Gastrocnemius medialis (tissue), 4 donors: ENCODE measurements at regions of chr11 and their contacts with region 1.

Region 1: GRCh38 chr11:57456960-57457642 is 3.2 kb upstream of the RTN4RL2 start:
- DNase-seq: peak; percentile 73 to 84
- ATAC-seq: peak; percentile 82 to 87
- H3K4me3 ChIP-seq: peak overlapping the region in 1 of 4 donors; percentile 30
- H3K27ac ChIP-seq: no peak overlapping the region
- H3K4me1 ChIP-seq: peaks cover 21 to 30% of the 10 kb centered on the region in 2 donors
- H3K27me3 ChIP-seq: peaks cover 22 to 41% (median 33%) of the 10 kb centered on the region in 3 donors
- CTCF ChIP-seq: peak; percentile 94 to 100 (median 96)
- POLR2A ChIP-seq: no peak

Region 2: DNA sequence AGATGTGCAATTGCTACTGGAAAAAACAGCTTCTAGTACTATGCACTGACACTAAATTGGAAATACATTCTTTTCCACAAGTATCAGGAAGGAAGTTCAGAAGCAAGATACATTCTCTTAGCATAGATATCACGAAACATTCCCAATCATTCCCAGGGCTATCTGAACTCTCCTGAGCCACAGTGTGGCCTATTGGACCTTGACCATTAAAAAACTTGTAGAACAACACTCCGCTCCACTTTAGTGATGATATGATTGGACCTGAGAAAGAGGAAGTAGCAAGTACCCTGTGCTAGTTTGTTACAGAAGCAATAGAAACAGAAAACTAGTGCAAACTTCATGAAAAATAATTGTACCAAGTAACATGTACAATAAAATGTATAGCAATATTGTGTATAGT is 479.8 kb before region 1 on chr11:
- in situ Hi-C with region 1: no loop called
- intact Hi-C with region 1: no loop called
- DNase-seq: no peak
- ATAC-seq: no peak
- H3K4me3 ChIP-seq: no peak overlapping the region
- H3K27ac ChIP-seq: no peak overlapping the region
- H3K4me1 ChIP-seq: no peaks in the 10 kb centered on the region
- H3K27me3 ChIP-seq: no peaks in the 10 kb centered on the region
- CTCF ChIP-seq: no peak
- POLR2A ChIP-seq: no peak

Region 3: GRCh38 chr11:57345555-57346211 is 111.4 kb before region 1 on chr11:
- in situ Hi-C with region 1: no loop called
- intact Hi-C with region 1: loop called (anchors 5 kb)
- DNase-seq: peak; percentile 46 to 70
- ATAC-seq: peak; percentile 84 to 92
- H3K4me3 ChIP-seq: no peak overlapping the region
- H3K27ac ChIP-seq: no peak overlapping the region
- H3K4me1 ChIP-seq: no peaks in the 10 kb centered on the region
- H3K27me3 ChIP-seq: no peaks in the 10 kb centered on the region
- CTCF ChIP-seq: peak; percentile 37 to 90 (median 68)
- POLR2A ChIP-seq: no peak

Region 4: GRCh38 chr11:57530596-57531507 is 73.8 kb after region 1 on chr11 and contains the start of gene TIMM10:
- in situ Hi-C with region 1: loop called in 2 of 4 experiments (anchors 5 kb)
- intact Hi-C with region 1: loop called (anchors 1 kb)
- DNase-seq: peak; percentile 96 to 98
- ATAC-seq: peak; percentile 95 to 97
- H3K4me3 ChIP-seq: peak within 1 kb of the TSS; percentile 84 to 94 (median 85)
- H3K27ac ChIP-seq: peak within 1 kb of the TSS; percentile 88 to 92 (median 90)
- H3K4me1 ChIP-seq: peaks cover 13 to 19% of the 10 kb centered on the region in 2 donors
- H3K27me3 ChIP-seq: no peaks in the 10 kb centered on the region
- CTCF ChIP-seq: no peak
- POLR2A ChIP-seq: peak; percentile 53 to 82
- total RNA-seq, gene TIMM10: 45.4 to 61.7 (median 49.5) TPM

Region 5: GRCh38 chr11:57644748-57645688 is 187.9 kb after region 1 on chr11:
- in situ Hi-C with region 1: loop called (anchors 5 to 25 kb)
- intact Hi-C with region 1: loop called (anchors 1 kb)
- DNase-seq: peak; percentile 66 to 73
- ATAC-seq: peak; percentile 69 to 76
- H3K4me3 ChIP-seq: no peak overlapping the region
- H3K27ac ChIP-seq: peak overlapping the region; percentile 29 to 56 (median 44)
- H3K4me1 ChIP-seq: peaks cover 17 to 22% of the 10 kb centered on the region in 2 donors
- H3K27me3 ChIP-seq: peaks cover 39 to 45% (median 43%) of the 10 kb centered on the region in 3 donors
- CTCF ChIP-seq: peak; percentile 71 to 96 (median 78)
- POLR2A ChIP-seq: no peak

Region 6: DNA sequence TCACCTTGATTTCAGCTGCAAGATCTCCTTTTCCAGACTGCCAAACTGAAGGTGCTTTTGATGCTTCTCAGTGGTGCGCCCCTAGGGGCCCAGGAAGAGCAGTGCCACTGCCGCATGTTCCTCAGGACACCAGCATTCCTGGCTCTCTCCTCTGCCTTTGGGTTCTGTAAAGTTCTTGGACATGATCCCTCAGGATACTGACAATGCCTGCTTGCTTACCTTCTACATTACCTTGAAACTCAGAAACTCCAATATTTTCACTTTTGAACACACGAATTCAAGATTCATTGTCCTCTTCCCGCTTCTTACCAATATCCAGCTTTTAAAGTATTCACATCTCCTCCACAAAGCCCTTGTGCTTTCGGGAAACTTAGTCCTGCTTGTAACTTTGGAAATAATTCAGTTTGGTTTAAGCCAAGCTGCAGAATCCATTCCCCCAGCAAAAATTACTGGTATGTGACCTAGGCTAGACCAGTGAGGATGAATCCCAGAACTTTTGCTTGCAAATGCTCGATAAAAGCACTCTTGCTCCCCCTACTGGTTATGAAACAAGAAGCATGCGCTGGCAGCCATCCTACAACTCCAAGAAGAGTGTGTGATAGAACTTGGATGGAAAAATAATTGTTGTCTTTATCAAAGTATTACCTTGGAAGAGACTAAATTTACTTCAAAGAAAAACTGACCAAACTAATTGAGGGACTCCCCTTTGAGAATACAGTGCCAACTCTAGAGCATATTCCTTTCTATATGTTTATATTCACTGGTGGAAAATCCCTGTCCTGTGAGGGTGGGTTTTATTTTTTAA is 1067.3 kb after region 1 on chr11:
- in situ Hi-C with region 1: loop called in 1 of 4 experiments (anchors 25 kb)
- intact Hi-C with region 1: loop called (anchors 10 kb)
- DNase-seq: peak in 1 of 2 donors; percentile 49
- ATAC-seq: peak; percentile 54 to 82
- H3K4me3 ChIP-seq: no peak overlapping the region
- H3K27ac ChIP-seq: no peak overlapping the region
- H3K4me1 ChIP-seq: no peaks in the 10 kb centered on the region
- H3K27me3 ChIP-seq: no peaks in the 10 kb centered on the region
- CTCF ChIP-seq: peak; percentile 40 to 70 (median 48)
- POLR2A ChIP-seq: no peak